RWPE1 (cell line): ENCODE measurements at regions of chr1 and their contacts with region 1.

Region 1: DNA sequence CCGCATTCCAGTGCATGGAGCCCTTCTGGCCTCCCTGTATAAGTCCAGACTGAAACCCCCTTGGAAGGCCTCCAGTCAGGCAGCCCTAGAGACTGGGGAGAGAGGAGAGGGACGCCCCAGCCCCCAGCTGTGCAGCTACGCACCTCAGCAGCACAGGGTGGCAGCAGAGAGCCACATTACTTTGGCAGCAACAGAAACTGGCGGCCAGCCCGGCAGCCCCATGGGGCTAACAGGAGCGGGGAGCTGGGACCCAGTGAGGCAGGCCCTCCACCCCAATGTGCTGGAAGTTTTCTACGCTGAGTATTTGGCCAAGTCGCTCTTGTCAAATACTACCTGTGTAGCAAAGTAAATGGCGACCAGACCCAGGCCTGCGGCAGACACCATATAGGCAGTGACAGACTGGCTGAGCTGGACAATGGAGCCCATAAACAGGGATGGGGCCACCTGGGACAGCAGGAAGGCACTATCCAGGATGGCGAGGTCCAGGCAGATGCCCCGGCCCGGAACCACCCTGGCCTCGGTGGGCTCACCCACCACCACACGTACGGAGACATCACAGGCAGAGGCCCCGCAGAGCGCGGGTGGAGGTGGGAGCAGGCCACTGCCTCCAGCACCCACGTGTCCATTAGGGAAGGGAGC is 21.2 kb downstream of the SLC45A3 start:
- DNase-seq: peak; percentile 91
- H3K27ac ChIP-seq: no peak overlapping the region
- CTCF ChIP-seq: peak; percentile 88

Region 2: GRCh38 chr1:205512059-205513045 is 146.7 kb before region 1 on chr1:
- CTCF ChIA-PET with region 1: interaction called, 12 read pairs
- POLR2A ChIA-PET with region 1: no interaction called
- DNase-seq: no peak
- H3K27ac ChIP-seq: peak overlapping the region; percentile 10
- CTCF ChIP-seq: no peak

Region 3: DNA sequence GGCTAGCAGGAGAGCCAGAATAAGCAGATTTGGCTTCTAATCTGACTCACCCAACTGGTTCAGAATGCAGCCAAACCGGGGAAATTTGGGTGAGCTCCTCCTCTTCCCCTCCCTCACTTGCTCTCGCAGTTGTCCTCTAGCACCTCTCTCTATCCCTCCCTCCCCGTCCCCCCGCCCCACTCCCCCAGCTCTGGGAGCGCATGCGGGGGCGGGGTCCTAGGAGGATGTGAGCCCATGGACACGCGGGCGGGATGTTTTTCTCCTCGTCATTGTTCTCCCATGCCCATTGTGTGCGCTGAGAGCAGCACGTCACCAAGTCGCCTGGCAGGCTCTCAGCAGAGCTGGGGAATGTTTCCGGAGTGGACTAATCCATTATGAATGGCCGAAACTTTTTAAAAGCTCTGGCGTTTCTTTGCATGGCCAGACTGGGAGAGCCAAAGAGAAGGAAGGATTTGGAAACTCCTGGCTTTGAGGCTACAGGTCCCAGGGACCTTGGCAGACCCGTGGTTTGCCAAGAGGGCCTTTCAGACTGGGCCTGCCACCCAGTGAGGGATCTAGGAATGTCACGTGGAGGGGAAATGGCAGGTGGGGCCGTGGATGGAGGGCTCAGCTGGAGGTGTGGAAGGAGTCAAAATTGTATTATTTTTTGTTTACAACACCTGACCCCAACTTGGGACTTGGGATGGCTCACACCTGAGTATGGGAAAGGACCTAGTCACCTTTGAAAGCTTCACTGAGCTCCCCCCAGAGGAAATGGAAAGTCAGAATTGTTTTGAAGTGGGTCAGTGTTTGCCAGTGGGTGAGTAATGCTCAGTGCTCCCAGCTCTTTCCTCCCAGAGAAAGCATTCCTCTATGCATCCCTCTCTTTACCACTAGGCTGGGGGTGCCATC is 115.4 kb before region 1 on chr1:
- CTCF ChIA-PET with region 1: interaction called, 16 read pairs
- POLR2A ChIA-PET with region 1: no interaction called
- DNase-seq: peak; percentile 83
- H3K27ac ChIP-seq: peak overlapping the region; percentile 77
- CTCF ChIP-seq: no peak

Region 4: DNA sequence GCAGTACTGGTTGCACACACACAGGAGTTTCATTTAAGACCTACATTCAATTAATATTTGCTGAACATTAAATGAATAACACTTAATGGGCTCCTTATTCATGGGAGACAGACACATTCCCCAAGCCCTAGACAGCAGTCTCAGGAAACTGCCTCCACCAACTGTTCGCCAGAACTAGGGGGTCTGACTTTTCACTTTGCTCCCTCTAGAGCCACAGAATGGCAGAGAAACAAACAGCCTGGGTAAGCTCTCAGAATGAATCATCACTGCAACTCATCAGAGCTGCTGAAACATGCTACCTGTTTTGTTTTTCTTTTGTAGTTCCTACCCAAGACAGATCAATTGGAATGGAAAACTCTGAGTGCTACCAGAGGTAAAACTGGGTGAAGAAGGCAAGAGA is 59.0 kb before region 1 on chr1:
- CTCF ChIA-PET with region 1: interaction called, 472 read pairs
- POLR2A ChIA-PET with region 1: no interaction called
- DNase-seq: peak; percentile 75
- H3K27ac ChIP-seq: peak overlapping the region; percentile 66
- CTCF ChIP-seq: no peak

Region 5: DNA sequence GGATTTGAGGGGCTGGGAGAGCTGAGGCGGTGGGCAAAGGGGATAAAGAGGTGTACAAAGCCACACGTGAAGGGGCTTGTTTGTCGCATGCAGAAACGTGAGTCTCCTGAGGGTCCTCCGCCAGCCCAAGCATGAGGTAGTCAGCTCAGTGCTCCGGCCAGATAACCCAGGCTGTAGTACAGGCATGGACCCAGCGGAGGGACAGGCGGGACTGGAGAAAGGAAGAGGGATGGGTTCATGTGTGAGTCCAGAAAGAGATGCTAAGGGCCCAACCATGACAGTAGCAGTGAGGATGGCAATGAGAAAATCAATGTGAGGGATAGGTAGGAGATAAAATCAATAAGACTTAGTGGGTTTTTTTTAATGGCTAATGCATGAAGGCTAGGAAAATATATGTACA is 13.5 kb before region 1 on chr1:
- CTCF ChIA-PET with region 1: interaction called, 12 read pairs
- POLR2A ChIA-PET with region 1: no interaction called
- DNase-seq: no peak
- H3K27ac ChIP-seq: no peak overlapping the region
- CTCF ChIP-seq: no peak

Region 6: GRCh38 chr1:205700865-205701401 is 41.9 kb after region 1 on chr1:
- CTCF ChIA-PET with region 1: interaction called, 174 read pairs
- POLR2A ChIA-PET with region 1: interaction called, 7 read pairs
- DNase-seq: no peak
- H3K27ac ChIP-seq: 0 out of 2 replicates have a peak overlapping the region, but pooled peaks have one; percentile 3
- CTCF ChIP-seq: no peak

Region 7: DNA sequence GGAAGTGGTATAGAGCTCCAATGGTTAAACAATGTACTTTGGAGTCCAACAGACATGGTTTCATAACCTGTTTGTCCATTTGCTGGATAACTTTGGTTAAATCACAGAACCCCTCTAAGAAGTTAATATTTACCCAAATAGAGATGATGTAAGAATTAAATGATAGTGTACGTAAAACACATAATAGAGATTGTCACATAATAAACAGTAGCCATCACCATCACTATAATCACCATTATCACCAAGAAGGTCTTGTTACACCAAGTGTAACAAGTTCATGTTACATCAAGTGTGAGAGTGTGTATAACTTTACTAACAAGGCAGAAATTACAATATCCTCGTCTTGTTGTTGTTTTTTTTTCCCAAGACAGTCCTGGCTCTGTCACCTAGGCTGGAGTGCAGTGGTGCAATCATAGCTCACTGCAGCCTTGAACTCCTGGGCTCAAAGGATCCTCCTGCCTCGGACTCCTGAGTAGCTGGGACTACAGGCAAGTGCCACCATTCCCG is 67.6 kb after region 1 on chr1:
- CTCF ChIA-PET with region 1: no interaction called
- POLR2A ChIA-PET with region 1: no interaction called
- DNase-seq: no peak
- H3K27ac ChIP-seq: no peak overlapping the region
- CTCF ChIP-seq: no peak

Region 8: DNA sequence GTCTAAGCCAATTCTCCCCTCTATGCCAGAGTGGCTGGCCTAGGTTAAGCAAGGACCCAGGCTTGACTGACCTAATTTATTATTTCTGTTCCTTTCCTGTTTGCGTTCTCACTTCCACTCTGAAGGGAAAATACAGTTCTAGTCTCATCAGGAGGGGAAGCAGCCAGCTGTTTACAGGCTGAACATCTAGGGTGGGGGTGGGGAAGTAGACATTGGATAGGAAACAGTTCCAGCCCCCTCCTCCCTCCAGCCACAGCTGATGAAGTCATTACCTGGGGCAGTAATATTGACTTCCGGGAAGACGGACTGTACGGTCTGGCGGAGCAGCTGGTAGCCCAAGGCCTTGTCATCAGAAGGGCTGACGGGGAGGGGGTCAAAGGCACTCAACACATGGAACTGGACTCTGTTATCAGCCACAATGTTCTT is 173.3 kb after region 1 on chr1:
- CTCF ChIA-PET with region 1: no interaction called
- POLR2A ChIA-PET with region 1: no interaction called
- DNase-seq: no peak
- H3K27ac ChIP-seq: no peak overlapping the region
- CTCF ChIP-seq: no peak